PC-3 (cell line): ENCODE measurements at regions of chr16 and their contacts with region 1.

Region 1: DNA sequence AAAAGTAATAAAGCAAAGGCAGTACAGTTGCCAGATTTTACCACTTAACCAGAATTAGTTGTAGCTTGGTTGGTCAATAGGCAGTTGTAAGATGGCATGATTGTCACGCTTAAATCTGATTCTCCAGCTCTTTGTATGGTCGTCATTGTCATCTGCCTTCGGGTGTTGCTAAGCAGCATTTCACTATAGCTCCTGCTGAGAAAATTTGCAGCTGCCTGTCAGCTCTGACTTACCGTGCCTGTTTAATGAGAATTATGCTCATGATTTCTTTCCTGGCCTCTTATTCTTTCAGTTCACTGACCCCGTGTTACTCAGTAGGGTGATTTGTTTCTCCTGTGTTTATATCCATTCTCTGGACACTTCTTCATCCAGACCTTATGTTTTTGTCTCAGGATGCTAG is 66.7 kb downstream of the TANGO6 start:
- DNase-seq: no peak
- ATAC-seq: no peak
- H3K4me3 ChIP-seq: no peak overlapping the region
- H3K27ac ChIP-seq: no peak overlapping the region
- H3K4me1 ChIP-seq: no peaks in the 10 kb centered on the region
- H3K27me3 ChIP-seq: no peaks in the 10 kb centered on the region
- CTCF ChIP-seq: no peak

Region 2: DNA sequence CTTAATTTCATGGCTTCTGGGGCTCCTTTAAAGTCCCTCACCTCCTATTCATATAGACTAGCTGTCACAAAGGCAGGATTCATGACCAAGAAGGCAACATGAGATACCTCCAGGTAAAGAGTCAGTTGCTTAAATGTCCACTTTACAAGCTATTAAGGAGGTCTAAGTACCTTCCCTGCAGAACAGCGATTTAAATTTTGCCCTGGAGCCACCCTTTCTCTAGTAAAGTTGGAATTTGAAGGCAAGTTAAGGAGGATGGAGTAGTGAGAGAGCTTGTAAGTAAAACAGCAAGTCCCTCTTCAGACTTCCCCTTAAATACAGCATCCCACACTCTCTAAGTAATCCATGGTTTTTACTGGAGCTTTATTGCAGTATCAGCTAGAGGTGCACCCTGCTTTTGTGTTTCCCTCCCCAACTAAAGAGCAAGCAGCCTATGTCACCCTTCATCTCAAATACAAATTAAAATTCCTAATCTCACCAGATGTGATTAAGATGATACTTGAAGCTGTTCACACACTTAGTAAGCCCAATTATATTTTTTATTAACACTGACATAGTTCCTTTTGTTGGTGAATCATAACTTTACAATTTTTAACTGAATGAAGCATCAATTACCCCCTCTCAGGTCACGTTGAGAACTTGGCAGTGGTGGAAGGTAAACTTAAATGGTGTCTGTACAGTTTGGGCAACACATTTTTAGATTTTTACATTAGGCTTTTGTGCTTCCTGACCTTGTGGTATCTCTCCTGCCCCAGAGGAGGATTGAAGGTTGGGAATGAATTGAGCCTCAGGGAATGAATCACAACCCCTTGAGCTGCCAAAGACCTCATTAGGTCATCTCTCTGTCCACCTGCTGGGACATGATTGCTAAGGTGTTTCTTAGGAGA is 42.2 kb after region 1 on chr16:
- CTCF ChIA-PET with region 1: interaction called, 11 read pairs
- POLR2A ChIA-PET with region 1: no interaction called
- intact Hi-C with region 1: no loop called
- DNase-seq: peak; percentile 57
- ATAC-seq: peak; percentile 87
- H3K4me3 ChIP-seq: no peak overlapping the region
- H3K27ac ChIP-seq: peak overlapping the region; percentile 80
- H3K4me1 ChIP-seq: peaks cover 12% of the 10 kb centered on the region
- H3K27me3 ChIP-seq: no peaks in the 10 kb centered on the region
- CTCF ChIP-seq: no peak